MCF 10A (cell line): ENCODE measurements at regions of chr20 and their contacts with region 1.

Region 1: DNA sequence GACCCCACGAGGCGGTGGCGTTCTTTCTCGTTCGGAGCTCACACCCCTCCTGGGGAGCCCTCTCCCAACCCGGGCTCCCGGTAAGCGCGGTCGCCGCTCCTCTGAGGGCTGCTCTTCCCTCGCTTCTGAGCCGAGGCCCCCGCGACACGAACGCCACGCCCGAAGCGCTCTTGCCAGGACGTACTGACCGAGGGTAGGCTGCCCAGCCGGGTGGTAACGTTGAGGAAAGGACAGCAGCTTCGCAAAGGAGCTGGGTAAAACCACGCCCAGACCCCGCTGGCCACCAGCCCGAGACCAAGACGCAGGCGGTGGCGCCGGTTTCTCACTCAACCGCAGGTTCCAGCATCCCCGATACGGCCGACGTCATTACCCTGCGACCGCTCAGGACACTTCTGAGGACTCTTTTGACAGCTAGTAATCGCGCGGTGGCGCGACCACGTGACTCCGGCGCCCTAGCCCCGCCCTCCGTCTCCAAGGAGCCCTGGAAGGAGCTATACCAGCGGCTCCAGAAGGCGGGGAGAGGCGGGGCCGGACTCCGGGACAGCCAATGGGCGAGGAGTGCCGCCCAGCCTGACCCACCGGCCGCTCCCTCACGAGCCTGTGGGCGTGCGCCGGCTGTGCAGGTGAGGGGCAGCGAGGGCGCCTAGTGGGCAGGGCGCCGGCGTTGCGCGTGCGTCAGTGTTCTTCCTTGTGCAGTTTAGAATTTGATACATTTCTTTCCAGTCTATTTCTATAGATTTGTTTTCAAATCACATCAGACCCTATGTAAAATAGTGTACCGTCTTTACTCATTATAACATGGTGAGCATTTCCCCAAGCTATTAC is 4.0 kb upstream of the GZF1 start:
- DNase-seq: peak; percentile 99
- H3K4me3 Mint-ChIP-seq: peak overlapping the region; percentile 86
- H3K27ac Mint-ChIP-seq: peak overlapping the region; percentile 83
- H3K4me1 Mint-ChIP-seq: peaks cover 4% of the 10 kb centered on the region
- H3K27me3 Mint-ChIP-seq: no peaks in the 10 kb centered on the region
- CTCF ChIP-seq: no peak

Region 2: GRCh38 chr20:23156170-23156841 is 201.7 kb before region 1 on chr20:
- CTCF ChIA-PET with region 1: no interaction called
- POLR2A ChIA-PET with region 1: interaction called, 15 read pairs
- intact Hi-C with region 1: no loop called
- DNase-seq: peak; percentile 93
- H3K4me3 Mint-ChIP-seq: no peak overlapping the region
- H3K27ac Mint-ChIP-seq: peak overlapping the region; percentile 99
- H3K4me1 Mint-ChIP-seq: peaks cover 70% of the 10 kb centered on the region
- H3K27me3 Mint-ChIP-seq: no peaks in the 10 kb centered on the region
- CTCF ChIP-seq: no peak

Region 3: GRCh38 chr20:23331450-23332350 is 26.3 kb before region 1 on chr20:
- CTCF ChIA-PET with region 1: no interaction called
- POLR2A ChIA-PET with region 1: no interaction called
- intact Hi-C with region 1: no loop called
- DNase-seq: no peak
- H3K4me3 Mint-ChIP-seq: no peak overlapping the region
- H3K27ac Mint-ChIP-seq: no peak overlapping the region
- H3K4me1 Mint-ChIP-seq: no peaks in the 10 kb centered on the region
- H3K27me3 Mint-ChIP-seq: no peaks in the 10 kb centered on the region
- CTCF ChIP-seq: no peak

Region 4: DNA sequence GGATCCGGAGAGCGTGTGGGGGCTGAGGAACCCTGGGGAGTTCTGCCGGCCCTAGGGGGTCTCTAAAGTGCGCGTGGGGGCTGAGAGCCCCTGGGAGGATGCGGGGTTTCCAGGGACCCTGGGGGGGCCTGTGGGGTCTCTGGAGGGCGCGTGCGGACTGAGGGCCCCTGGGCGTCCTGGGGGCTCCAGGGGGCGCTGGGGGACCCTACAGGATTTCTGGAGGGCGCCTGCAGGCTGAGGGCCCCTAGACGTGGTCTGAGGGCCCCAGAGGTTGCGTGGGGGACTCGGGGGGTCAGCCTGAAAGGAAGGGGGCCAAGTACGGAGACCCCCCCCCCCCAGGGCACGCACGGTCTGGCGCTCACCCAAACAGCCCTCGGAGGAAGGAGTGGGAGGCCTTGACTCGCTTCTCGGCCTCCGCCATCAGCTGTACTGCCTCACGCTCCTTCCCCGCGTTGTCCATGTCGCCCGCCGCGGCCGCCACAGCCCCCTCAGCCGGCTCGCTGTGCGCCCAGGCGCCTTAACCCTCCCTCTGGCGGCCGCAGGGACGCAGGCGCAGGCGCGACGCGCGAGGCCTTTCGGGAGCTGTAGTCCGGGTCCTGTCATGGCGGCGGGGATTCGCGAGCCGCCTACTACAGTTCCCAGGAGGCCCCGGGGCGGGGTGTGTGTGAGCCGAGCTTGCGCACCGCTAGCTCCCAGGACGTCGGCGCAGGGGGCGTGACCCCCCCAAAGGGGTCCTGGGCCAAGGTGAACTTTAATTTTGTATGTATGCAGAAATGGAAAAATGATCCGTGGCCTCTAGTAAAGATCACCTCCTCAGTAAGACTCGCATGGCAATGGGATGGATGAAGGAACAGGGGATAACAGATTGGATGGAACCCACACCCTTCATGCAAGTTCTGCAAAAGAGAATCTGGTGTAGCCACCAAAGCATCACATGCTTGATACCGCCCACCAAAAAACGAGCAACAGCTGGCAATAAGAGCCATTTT is 63.3 kb after region 1 on chr20 and contains the start of gene NAPB:
- CTCF ChIA-PET with region 1: interaction called, 8 read pairs
- POLR2A ChIA-PET with region 1: interaction called, 261 read pairs
- intact Hi-C with region 1: loop called (anchors 5 kb)
- DNase-seq: peak; percentile 92
- H3K4me3 Mint-ChIP-seq: peak within 1 kb of the TSS; percentile 78
- H3K27ac Mint-ChIP-seq: peak within 1 kb of the TSS; percentile 90
- H3K4me1 Mint-ChIP-seq: peaks cover 9% of the 10 kb centered on the region
- H3K27me3 Mint-ChIP-seq: no peaks in the 10 kb centered on the region
- CTCF ChIP-seq: peak; percentile 39
- total RNA-seq, gene NAPB: 9.6 and 10.9 TPM in 2 replicates

Region 5: DNA sequence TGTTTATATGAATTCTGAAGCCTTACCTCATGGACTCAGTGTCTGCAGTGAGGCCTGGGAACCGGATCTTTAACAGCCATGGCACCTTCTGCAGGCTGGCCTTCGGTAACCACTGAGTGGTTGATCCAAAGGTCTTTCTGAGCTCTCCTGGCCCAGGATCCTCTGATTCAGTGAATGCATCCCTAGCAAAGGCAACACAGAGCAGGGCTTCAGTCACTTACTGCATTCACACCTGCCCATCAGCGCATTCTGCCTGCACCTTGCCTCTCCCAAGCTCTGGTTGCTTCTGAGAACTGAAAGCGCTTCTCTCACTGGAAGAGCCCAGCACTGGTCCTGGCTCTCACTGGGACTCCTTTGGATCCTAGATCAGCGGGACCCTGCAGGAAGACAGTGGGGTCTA is 256.2 kb after region 1 on chr20:
- CTCF ChIA-PET with region 1: no interaction called
- POLR2A ChIA-PET with region 1: no interaction called
- intact Hi-C with region 1: no loop called
- DNase-seq: no peak
- H3K4me3 Mint-ChIP-seq: no peak overlapping the region
- H3K27ac Mint-ChIP-seq: no peak overlapping the region
- H3K4me1 Mint-ChIP-seq: no peaks in the 10 kb centered on the region
- H3K27me3 Mint-ChIP-seq: no peaks in the 10 kb centered on the region
- CTCF ChIP-seq: no peak

Region 6: DNA sequence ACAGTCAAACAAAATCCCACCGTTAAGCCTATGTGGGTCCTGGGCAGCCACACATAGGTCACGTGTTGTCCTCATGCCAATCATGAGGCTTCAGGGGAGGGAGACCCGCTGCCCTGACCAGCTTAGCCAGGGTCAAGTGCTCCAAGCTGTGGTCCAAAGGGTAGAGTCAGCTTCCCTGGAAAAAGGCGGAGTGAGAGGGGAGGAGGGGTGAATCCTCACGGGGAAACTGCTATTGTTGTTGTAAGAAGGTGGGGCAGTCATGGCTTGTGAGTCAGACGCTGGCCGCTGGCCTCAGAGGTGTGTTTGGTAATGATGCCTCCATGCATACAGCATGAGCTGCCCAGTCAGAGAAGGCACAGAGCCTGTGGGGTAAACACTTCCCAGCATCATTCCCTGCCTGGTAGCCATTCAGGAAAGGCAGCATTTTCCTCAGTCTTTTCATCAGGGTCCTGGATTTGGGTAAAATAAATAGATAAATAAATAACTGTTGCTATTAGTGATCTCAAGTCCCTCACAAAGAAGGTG is 271.1 kb after region 1 on chr20:
- CTCF ChIA-PET with region 1: no interaction called
- POLR2A ChIA-PET with region 1: interaction called, 8 read pairs
- intact Hi-C with region 1: loop called (anchors 5 kb)
- DNase-seq: peak; percentile 96
- H3K4me3 Mint-ChIP-seq: no peak overlapping the region
- H3K27ac Mint-ChIP-seq: peak overlapping the region; percentile 92
- H3K4me1 Mint-ChIP-seq: peaks cover 37% of the 10 kb centered on the region
- H3K27me3 Mint-ChIP-seq: no peaks in the 10 kb centered on the region
- CTCF ChIP-seq: no peak